ENCODE measurements at regions of chr1 and their contacts with region 1.

Region 1: GRCh38 chr1:41683681-41684500 is 199.4 kb upstream of the EDN2 start:
- DNase-seq: peak; percentile 50
- H3K4me3 Mint-ChIP-seq: peak overlapping the region; percentile 54
- H3K27ac Mint-ChIP-seq: peak overlapping the region; percentile 75
- H3K4me1 Mint-ChIP-seq: peaks cover 99% of the 10 kb centered on the region
- H3K27me3 Mint-ChIP-seq: no peaks in the 10 kb centered on the region

Region 2: DNA sequence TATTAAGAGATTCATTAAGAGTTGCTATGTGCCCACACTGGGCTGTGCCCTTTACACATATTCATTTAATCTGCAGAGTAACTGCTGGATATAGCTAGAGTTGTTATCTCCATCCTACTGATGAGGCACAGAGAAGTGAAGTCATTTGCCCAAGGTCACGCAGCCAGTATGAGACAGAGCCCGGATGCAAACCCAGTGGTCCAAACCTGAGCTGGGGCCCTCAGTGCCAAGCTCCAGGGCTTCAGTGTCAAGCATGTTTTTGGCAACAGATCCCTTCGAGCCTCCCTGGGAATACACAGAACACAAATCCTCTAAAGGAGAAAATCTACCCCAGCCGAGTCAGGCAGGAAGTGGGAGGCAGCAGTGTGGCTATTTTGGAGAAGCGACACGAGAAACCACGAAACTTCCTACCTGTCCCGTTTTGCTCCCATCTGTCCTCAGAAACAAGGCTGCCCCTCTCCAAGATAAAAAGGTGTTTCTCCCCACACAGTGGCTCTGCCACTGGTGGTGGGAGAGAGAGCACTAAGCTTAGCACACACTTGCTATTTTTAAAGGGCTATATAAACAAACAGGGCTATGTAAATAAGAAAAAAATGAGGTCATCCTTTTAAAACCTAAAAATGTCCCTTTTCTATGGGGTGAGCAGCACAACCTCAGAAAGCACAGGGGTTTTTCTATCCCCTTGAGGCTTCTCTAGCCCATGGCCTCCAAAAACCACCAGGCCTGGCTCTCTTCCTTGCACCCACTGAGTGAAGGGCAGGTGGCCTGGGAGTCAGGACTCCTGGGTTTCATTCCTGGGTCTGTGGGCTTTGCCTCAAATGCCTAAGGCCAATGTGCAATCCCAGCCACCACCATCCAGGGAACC is 60.8 kb before region 1 on chr1:
- intact Hi-C with region 1: no loop called
- DNase-seq: no peak
- H3K4me3 Mint-ChIP-seq: peak overlapping the region; percentile 72
- H3K27ac Mint-ChIP-seq: peak overlapping the region; percentile 63
- H3K4me1 Mint-ChIP-seq: peaks cover 72% of the 10 kb centered on the region
- H3K27me3 Mint-ChIP-seq: no peaks in the 10 kb centered on the region

Region 3: DNA sequence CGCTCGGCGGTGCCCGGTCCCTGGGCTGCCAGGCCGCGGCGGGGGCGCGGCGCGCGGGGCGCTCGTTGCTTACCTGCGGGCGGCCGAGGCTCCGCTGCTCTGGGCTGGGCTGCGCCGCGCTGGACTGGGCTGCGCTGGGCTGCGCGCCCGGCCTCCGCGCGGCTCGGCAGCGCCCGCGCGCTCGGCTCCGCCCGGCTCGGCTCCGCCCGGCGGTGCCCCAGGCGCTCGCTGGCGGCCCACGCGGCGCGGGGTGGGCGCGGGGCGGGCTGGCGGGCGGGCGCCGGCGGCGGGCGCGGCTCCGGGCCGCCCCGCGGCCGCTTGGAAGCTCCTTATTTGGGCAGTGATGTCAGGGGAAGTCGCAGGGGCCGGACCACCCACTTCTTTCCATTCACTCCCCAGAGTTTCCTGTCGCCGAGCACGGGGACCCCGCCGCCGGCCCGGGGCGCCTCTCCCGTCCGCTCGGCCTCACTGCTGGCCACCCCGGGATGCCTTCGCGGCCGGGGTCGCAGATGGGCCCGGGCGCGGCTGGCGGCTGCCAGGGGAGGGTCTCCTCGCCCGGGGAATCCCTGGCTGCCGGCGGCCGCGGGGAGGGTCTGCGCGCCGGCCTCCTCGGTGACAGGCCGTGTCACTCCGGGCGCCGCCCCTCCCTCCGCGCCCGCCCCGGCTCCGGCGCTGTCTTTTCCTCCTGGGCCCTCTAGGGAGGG is 21.7 kb before region 1 on chr1:
- intact Hi-C with region 1: loop called (anchors 2 kb)
- DNase-seq: peak; percentile 73
- H3K4me3 Mint-ChIP-seq: peak overlapping the region; percentile 70
- H3K27ac Mint-ChIP-seq: peak overlapping the region; percentile 65
- H3K4me1 Mint-ChIP-seq: peaks cover 83% of the 10 kb centered on the region
- H3K27me3 Mint-ChIP-seq: no peaks in the 10 kb centered on the region

Region 4: GRCh38 chr1:41673378-41673777 is 10.5 kb before region 1 on chr1:
- intact Hi-C with region 1: loop called (anchors 1 kb)
- DNase-seq: peak; percentile 57
- H3K4me3 Mint-ChIP-seq: peak overlapping the region; percentile 70
- H3K27ac Mint-ChIP-seq: peak overlapping the region; percentile 97
- H3K4me1 Mint-ChIP-seq: peaks cover 94% of the 10 kb centered on the region
- H3K27me3 Mint-ChIP-seq: no peaks in the 10 kb centered on the region

Region 5: GRCh38 chr1:41698916-41699860 is 15.3 kb after region 1 on chr1:
- intact Hi-C with region 1: no loop called
- DNase-seq: no peak
- H3K4me3 Mint-ChIP-seq: no peak overlapping the region
- H3K27ac Mint-ChIP-seq: no peak overlapping the region
- H3K4me1 Mint-ChIP-seq: peaks cover 15% of the 10 kb centered on the region
- H3K27me3 Mint-ChIP-seq: peaks cover 2% of the 10 kb centered on the region

Region 6: DNA sequence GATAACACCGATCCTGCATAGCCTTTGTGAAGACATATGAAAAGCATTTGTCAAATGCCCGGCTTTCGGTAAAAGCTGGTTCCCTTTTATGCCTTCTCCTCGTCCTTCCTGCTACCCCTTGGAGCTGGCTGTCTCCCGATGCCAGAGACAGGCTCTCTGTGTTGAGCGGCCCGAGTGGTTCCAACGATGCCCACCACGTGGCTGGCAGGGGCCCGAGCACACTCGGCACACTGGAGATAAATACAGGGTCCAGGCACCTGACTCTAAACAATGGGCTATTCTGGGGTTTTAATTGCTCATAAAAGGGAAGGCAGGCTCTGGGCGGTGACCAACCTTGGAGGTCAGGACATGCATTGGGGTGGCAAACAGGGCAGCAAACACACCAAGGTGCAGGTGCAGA is 27.7 kb after region 1 on chr1:
- intact Hi-C with region 1: loop called (anchors 2 kb)
- DNase-seq: no peak
- H3K4me3 Mint-ChIP-seq: no peak overlapping the region
- H3K27ac Mint-ChIP-seq: no peak overlapping the region
- H3K4me1 Mint-ChIP-seq: peaks cover 35% of the 10 kb centered on the region
- H3K27me3 Mint-ChIP-seq: peaks cover 3% of the 10 kb centered on the region

Measured in activated T-helper 1 cell treated with anti-CD3 and anti-CD28 coated beads, Interleukin-12 subunit alpha, Interleukin-12 subunit beta, Interleukin-2, Interleukin-4 antibody, amounts not matched to agents 30 ng/mL and 10 ng/mL and 1 ng/mL, durations not matched to agents 14 hours and 24 hours and 36 hours (primary cell).